HEK293 (cell line): ENCODE measurements at regions of chr6 and their contacts with region 1.

Region 1: DNA sequence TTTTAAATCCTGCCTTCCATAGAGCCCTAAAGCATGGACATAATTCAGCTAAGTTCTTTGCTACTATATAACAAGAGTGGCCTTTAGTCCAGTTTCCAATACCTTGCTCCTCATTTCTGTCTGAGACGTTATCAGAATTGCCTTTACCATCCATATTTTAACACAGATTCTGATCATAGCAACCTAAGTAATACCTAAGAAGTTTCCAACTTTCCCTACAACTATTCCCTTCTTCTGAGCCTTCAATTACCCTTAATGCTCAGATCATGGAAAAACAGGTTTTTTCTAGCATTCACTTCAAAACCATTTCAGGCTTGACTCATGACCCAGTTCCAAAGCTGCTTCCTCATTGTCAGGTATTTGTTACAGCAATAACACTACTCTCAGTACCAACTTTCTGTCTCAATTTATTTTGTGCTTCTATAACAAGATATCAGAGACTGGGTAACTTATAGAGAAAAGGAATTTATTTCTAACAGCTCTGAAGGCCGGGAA is 367.1 kb downstream of the C6orf118 start:
- H3K4me3 ChIP-seq: no peak overlapping the region
- H3K27ac ChIP-seq: no peak overlapping the region
- H3K4me1 ChIP-seq: no peaks in the 10 kb centered on the region
- CTCF ChIP-seq: no peak

Region 2: GRCh38 chr6:164927288-164928056 is 14.8 kb before region 1 on chr6:
- CTCF ChIA-PET with region 1: interaction called, 12 read pairs
- POLR2A ChIA-PET with region 1: no interaction called
- H3K4me3 ChIP-seq: no peak overlapping the region
- H3K27ac ChIP-seq: no peak overlapping the region
- H3K4me1 ChIP-seq: no peaks in the 10 kb centered on the region
- CTCF ChIP-seq: peak; percentile 63

Region 3: DNA sequence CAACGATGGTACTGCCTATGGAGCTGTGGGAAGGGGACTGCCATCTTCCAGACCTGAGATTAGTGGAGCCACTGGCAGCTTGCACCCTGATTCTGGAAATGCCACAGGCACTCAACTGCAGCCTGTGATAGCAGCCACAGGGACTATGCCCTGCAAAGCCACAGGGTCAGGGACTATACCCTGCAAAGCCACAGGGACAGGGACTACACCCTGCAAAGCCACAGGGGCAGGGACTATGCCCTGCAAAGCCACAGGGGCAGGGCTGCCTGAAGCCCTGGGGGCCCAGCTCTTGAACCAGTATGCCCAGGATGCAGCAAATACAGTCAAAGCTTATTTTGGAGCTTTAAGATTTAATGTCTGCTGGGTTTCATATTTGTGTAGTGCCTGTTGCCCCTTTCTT is 20.5 kb after region 1 on chr6:
- CTCF ChIA-PET with region 1: no interaction called
- POLR2A ChIA-PET with region 1: no interaction called
- H3K4me3 ChIP-seq: no peak overlapping the region
- H3K27ac ChIP-seq: no peak overlapping the region
- H3K4me1 ChIP-seq: no peaks in the 10 kb centered on the region
- CTCF ChIP-seq: no peak